Dorsolateral prefrontal cortex (tissue), 120 donors: ENCODE measurements at regions of chr7 and their contacts with region 1.

Region 1: DNA sequence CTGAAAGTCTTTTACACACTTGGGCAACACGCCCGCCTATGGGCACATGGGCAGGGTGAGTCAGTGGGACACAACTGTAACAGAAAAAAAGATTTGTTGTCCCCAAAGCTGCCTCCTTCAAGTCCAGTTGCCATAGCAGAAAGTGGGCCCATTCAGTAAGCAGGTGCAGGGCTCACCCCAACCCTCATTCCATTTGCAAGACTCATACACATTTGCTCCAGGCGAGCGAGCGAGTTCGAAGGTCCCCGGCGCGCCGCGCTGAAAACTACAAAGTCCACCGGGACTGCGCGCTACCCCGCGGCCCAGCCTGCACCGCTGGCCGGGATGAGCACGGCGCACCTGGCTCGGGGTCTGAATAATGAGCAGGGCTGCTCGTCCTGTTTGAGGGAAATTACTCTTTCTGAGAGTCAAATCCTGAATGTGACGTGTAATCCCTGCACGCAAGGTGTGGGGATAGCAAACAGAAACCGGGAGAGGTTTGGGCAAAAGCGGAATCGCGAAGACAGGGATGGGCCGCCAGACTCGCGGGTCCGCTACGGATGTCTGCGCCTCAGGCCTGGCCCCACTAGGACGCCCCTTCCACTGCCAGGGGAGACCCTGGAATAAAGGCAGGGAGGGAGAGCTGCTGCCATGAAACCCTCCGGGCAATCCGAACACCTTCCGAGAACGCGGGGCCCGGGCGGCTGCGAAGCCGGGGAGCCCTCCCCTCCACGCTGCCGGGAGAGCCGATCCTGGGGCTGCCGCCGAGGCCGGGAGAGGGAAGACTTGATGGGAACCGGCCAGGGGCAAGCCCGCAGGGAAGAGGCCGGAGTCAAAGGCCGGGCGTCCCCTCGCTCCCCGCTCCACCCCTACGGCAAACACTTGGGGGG is 982 bp downstream of the COBL start:
- DNase-seq: peak in 6 of 10 donors; percentile 59 to 80 (median 72)
- H3K4me3 ChIP-seq: peak overlapping the region; percentile 62 to 92 (median 79)
- H3K27ac ChIP-seq: peak overlapping the region; percentile 62 to 100 (median 98)
- H3K27me3 ChIP-seq: no peaks in the 10 kb centered on the region
- CTCF ChIP-seq: peak in 1 of 56 donors; percentile 10

Region 2: GRCh38 chr7:51187941-51188340 is 127.7 kb before region 1 on chr7:
- intact Hi-C with region 1: loop called in 1 of 2 experiments (anchors 5 kb)
- DNase-seq: peak; percentile 61 to 82 (median 78)
- H3K4me3 ChIP-seq: no peak overlapping the region
- H3K27ac ChIP-seq: peak overlapping the region; percentile 38 to 92 (median 84)
- H3K27me3 ChIP-seq: no peaks in the 10 kb centered on the region
- CTCF ChIP-seq: peak in 54 of 56 donors; percentile 24 to 79 (median 62)

Region 3: DNA sequence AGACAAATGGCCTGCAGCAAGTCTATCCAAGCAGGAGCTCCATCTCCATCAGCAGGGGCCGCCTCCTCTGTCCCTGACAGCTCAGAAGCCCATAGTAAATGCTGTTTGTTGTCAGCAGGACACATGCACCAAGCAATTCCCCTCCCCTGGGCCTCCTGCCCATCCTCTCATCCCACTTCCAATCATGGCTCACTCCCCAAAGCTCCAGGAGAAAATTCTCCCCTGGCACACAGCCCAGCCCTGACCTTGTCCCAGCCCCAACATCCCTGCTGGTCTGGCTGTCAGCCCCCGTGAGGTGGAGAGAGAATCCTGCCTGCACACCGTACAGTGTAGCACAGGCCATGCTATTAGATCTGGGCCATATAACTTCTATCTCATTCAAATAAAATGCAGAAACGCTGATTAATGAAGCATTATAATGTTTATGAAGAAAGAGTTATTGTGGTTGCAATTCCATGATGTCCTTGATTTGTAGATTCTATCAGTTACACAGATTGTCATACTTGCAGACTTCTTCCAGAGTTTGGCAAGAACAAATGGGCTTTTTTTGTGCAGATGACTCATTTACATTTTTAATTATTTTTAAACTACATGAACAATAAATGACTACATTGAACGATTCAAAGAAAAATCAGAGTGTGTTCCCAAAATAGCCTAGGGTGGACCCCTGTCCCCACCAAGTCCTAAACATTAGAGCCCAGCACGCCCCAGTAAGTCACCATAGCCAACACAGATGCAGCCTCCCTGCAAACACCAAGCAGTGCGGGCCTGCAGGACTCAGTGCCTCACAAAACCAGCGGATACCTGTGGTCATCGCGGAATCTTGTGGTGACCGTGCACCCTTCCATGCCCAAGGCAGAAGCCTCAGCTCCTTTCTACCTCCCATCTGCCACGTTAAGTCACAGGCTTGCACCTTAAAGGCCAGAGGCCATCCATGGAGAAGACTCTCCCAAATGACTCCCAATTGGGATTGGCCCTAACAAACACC is 69.1 kb before region 1 on chr7:
- intact Hi-C with region 1: loop called in 1 of 2 experiments (anchors 5 kb)
- DNase-seq: peak; percentile 57 to 96 (median 76)
- H3K4me3 ChIP-seq: peak overlapping the region in 3 of 59 donors; percentile 8 to 16 (median 8)
- H3K27ac ChIP-seq: peak overlapping the region; percentile 21 to 99 (median 89)
- H3K27me3 ChIP-seq: no peaks in the 10 kb centered on the region
- CTCF ChIP-seq: peak in 29 of 56 donors; percentile 4 to 48 (median 23)

Region 4: DNA sequence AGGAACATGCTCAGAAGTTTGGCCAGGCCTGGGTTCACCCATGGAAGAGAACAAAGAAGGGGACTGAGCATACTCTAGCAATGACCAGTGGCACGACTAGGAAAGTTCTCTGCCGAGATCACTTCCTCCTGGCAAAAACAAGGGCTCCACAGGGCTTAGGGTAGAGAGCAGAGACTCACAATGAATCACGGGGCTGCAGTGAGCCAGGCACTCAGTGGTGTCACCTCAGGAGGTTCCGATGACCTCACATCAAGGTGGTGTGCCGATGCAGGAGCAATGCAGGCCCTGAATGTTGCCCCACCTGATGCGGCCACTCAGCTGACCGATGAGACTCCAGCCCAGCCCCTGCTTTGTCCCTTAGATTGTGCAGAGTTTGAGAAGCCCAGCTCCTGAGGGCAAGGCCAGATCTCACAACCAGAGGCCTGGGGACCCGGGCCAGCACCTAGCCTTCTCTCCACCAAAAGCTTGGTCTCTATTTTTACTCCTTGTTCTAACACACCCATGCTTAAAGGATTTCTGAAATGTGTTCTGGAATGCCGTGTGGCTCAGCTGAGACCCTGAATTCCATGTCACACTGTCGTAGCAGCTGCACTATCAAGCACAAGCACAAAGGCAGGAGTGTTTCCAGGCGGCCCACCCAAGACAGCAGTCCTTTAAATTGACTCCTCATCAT is 60.0 kb before region 1 on chr7:
- intact Hi-C with region 1: loop called in 1 of 2 experiments (anchors 5 kb)
- DNase-seq: peak in 1 of 10 donors; percentile 44
- H3K4me3 ChIP-seq: peak overlapping the region in 3 of 59 donors; percentile 2 to 33 (median 3)
- H3K27ac ChIP-seq: peak overlapping the region; percentile 33 to 100 (median 94)
- H3K27me3 ChIP-seq: no peaks in the 10 kb centered on the region
- CTCF ChIP-seq: no peak

Region 5: GRCh38 chr7:51350200-51350921 is 34.7 kb after region 1 on chr7:
- intact Hi-C with region 1: loop called in 1 of 2 experiments (anchors 5 kb)
- DNase-seq: no peak
- H3K4me3 ChIP-seq: no peak overlapping the region
- H3K27ac ChIP-seq: no peak overlapping the region
- H3K27me3 ChIP-seq: no peaks in the 10 kb centered on the region
- CTCF ChIP-seq: no peak